Posterior cingulate gyrus (tissue), 11 donors: ENCODE measurements at regions of chr3 and their contacts with region 1.

Region 1: DNA sequence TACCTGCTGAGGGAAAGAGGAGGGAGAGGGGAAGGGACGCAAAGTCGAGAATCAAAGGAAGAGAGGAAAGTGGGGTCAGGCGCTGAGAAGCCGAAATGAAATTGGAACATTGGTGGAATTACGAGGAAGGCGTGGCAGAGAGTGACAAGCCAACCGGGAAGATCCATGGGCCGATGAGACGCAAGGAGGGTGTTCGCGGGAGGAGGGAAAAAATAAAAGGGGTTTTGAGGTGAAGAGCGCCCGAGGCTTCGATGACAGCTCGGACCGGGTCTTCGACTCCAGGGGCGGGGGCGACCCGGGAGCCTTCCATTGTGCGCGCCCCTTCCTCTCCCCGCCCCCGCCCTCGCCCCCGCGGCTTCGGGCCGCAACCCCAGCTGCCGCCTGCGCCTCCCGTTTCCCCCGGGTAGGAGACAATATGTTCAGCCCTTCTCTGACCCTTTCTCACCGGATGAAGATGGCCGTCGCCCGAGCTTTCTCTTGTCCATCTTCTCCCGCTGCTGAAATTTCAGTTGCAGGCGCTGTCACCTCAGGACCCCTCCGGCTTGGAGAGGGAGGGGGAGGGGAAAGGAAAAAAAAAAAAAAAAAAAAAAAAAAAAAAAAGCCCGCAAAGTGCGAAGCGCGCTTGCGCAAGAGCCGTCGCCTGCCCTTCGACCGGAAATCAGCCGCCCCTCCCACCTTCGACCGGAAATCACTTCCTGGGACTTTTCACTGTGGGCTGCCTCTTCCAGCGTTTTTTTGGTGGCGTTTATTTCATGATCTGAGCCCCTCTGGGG is at the start of gene SENP7:
- DNase-seq: peak; percentile 62 to 95 (median 78)

Region 2: GRCh38 chr3:101561630-101562328 is 48.9 kb after region 1 on chr3 and contains the start of gene TRMT10C:
- intact Hi-C with region 1: loop called (anchors 2 kb)
- DNase-seq: peak; percentile 89 to 99 (median 94)